ENCODE measurements at regions of chr5 and their contacts with region 1.

Region 1: GRCh38 chr5:76601470-76601869 is 21.7 kb downstream of the F2RL2 start:
- DNase-seq: peak; percentile 69
- ATAC-seq: peak; percentile 67
- H3K4me3 ChIP-seq: no peak overlapping the region
- H3K27ac ChIP-seq: no peak overlapping the region
- H3K4me1 ChIP-seq: peaks cover 7% of the 10 kb centered on the region
- H3K27me3 ChIP-seq: no peaks in the 10 kb centered on the region
- CTCF ChIP-seq: peak; percentile 75

Region 2: GRCh38 chr5:76641514-76642120 is 40.1 kb after region 1 on chr5:
- CTCF ChIA-PET with region 1: interaction called, 4 read pairs
- POLR2A ChIA-PET with region 1: no interaction called
- intact Hi-C with region 1: loop called (anchors 1 kb)
- DNase-seq: peak; percentile 73
- ATAC-seq: 0 out of 2 replicates have a peak, but pooled peaks have one; percentile 51
- H3K4me3 ChIP-seq: no peak overlapping the region
- H3K27ac ChIP-seq: no peak overlapping the region
- H3K4me1 ChIP-seq: no peaks in the 10 kb centered on the region
- H3K27me3 ChIP-seq: no peaks in the 10 kb centered on the region
- CTCF ChIP-seq: peak; percentile 84

Region 3: DNA sequence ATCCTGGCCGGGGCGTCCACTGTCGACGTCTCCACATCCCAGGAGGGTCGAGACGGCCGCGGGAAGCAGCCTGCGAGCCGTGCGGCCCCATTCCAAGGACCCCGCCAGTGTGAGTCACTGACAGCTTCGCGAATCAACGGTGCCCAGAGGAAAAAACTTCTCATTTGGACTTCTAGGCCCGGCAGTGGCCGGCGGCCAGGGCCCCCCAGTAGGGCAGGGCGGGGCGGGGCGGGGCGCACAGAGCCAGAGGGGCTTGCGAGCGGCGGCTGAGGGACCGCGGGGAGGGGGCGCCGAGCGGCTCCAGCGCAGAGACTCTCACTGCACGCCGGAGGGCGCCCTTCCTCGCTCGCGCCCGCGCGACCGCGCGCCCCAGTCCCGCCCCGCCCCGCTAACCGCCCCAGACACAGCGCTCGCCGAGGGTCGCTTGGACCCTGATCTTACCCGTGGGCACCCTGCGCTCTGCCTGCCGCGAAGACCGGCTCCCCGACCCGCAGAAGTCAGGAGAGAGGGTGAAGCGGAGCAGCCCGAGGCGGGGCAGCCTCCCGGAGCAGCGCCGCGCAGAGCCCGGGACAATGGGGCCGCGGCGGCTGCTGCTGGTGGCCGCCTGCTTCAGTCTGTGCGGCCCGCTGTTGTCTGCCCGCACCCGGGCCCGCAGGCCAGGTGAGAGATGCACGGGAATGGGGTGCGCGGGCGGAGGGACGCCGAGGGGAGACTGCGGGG is 114.4 kb after region 1 on chr5 and contains the start of gene F2R:
- CTCF ChIA-PET with region 1: no interaction called
- POLR2A ChIA-PET with region 1: no interaction called
- intact Hi-C with region 1: loop called (anchors 1 kb)
- DNase-seq: peak; percentile 38
- ATAC-seq: peak; percentile 84
- H3K4me3 ChIP-seq: peak within 1 kb of the TSS; percentile 89
- H3K27ac ChIP-seq: peak within 1 kb of the TSS; percentile 25; the same call in 1 of the 2 replicates
- H3K4me1 ChIP-seq: peaks cover 5% of the 10 kb centered on the region; the same call in 1 of the 2 replicates
- H3K27me3 ChIP-seq: no peaks in the 10 kb centered on the region
- CTCF ChIP-seq: peak; percentile 42
- total RNA-seq, gene F2R: 16.1 and 16.9 TPM in 2 replicates

Region 4: DNA sequence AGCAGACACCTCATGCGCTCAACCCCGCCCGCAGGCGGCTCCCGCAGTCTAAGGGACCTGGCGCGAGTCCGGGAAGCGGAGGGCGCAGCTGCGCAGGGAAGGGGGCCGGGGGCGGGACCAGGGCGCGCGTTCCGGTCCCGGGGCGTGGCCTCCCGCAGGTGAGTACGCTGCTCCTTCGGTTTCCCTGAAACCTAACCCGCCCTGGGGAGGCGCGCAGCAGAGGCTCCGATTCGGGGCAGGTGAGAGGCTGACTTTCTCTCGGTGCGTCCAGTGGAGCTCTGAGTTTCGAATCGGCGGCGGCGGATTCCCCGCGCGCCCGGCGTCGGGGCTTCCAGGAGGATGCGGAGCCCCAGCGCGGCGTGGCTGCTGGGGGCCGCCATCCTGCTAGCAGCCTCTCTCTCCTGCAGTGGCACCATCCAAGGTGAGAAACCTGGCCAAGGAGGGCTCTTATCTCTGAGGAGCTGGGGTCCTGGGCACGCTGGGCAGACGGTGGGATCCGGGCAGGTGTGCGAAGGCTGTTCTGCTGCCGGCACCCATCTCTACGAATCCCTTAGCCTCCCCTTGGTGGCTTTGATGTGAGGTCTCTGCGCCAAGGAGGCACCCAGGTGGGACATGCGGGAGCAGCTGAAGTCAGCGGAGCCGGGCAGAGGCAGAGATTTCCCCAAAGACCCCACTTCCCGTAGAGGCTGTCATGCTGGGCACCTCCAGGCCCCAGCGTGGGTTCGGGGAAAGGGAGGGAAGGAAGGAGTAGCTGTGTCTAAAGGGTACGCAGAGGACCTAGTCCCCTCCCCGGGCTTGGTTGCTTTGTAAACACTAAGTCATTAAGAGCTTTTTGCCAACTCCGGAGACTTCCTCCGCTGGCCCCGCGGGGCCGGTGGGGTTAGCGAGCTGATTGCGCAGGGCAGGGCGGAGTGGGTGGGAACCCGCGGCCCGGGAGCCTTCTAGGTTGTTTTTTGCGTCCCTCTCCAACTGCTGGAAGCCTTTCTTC is 217.7 kb after region 1 on chr5 and contains the start of gene F2RL1:
- CTCF ChIA-PET with region 1: interaction called, 5 read pairs
- POLR2A ChIA-PET with region 1: no interaction called
- intact Hi-C with region 1: loop called (anchors 5 kb)
- DNase-seq: peak; percentile 93
- ATAC-seq: peak; percentile 65
- H3K4me3 ChIP-seq: peak within 1 kb of the TSS; percentile 79
- H3K27ac ChIP-seq: peak within 1 kb of the TSS; percentile 97
- H3K4me1 ChIP-seq: peaks cover 64% of the 10 kb centered on the region
- H3K27me3 ChIP-seq: no peaks in the 10 kb centered on the region
- CTCF ChIP-seq: no peak
- total RNA-seq, gene F2RL1: 163 and 167 TPM in 2 replicates

Region 5: DNA sequence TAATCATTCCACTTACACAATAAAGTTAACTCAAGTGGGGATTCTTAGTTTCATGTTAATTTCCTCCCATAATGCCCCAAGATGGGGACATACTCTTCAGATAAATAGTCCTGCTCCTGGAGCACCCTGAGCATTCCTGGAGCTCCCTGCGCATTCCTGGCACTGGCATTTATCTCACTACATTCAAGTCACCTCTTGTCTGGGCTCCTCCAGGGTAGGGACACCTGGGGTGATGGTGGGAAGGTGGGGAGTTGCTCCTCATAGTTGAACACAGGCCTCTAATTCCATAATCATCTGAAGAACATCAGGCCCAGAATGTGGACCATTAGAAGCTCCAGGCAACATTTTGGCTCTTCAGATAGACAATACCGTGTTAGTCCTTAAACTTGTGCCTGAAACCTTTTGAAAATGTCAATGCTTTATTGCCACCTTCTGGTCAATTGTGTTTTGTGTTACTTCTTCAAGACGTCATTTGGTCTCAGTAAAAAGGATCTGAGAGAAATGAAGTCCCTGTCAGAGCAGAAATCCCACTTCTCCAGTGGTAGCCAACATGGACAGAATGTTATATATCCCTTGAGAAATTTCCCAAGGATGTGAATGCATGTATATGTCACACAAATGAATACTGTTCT is 414.6 kb after region 1 on chr5:
- CTCF ChIA-PET with region 1: no interaction called
- POLR2A ChIA-PET with region 1: no interaction called
- intact Hi-C with region 1: loop called (anchors 2 kb)
- DNase-seq: peak; percentile 62
- ATAC-seq: peak; percentile 52
- H3K4me3 ChIP-seq: no peak overlapping the region
- H3K27ac ChIP-seq: no peak overlapping the region
- H3K4me1 ChIP-seq: peaks cover 4% of the 10 kb centered on the region; the same call in 1 of the 2 replicates
- H3K27me3 ChIP-seq: no peaks in the 10 kb centered on the region
- CTCF ChIP-seq: peak; percentile 64

Measured in PC-3 (cell line).